ENCODE measurements at regions of chr9 and their contacts with region 1.

Region 1: GRCh38 chr9:22008736-22009562 is at the start of gene CDKN2B:
- DNase-seq: peak; percentile 99
- H3K27ac ChIP-seq: peak within 1 kb of the TSS; percentile 97
- CTCF ChIP-seq: peak; percentile 99

Region 2: GRCh38 chr9:21616082-21616778 is 392.7 kb before region 1 on chr9:
- CTCF ChIA-PET with region 1: no interaction called
- POLR2A ChIA-PET with region 1: no interaction called
- DNase-seq: peak; percentile 92
- H3K27ac ChIP-seq: peak overlapping the region; percentile 83
- CTCF ChIP-seq: no peak

Region 3: DNA sequence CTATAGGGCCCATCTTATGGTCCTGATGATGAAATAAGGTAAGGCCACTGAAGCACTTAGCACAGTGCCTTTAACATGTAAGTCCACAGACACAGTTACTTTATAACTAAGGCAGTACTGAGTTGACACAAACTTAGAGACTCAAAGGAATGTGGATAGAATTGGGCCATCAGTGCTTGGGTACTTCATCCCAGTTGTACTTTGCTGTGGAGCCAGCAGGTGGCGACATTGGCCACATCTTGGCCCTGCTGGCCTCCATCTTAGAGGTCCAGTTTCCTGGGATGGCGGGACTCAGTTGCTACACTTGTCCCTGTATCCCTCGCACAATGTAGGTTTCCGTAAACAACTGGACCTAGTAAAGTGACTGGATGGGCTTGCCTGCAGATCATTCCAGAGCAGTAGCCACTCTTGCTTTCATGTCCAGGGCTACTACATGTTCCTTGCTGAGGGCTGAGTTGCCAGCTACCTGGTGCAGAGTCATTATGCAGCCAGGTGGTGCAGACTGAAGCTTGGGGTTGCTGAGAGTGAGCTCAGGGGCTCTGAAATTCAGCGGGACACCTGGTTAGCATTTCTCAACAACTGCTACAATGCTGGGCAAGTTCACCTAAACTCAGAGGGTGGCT is 195.9 kb before region 1 on chr9:
- CTCF ChIA-PET with region 1: interaction called, 12 read pairs
- POLR2A ChIA-PET with region 1: no interaction called
- DNase-seq: peak; percentile 58
- H3K27ac ChIP-seq: peak overlapping the region; percentile 76
- CTCF ChIP-seq: peak; percentile 86

Region 4: GRCh38 chr9:21995177-21996086 is 13.5 kb before region 1 on chr9:
- CTCF ChIA-PET with region 1: interaction called, 16 read pairs
- POLR2A ChIA-PET with region 1: interaction called, 14 read pairs
- DNase-seq: peak; percentile 46
- H3K27ac ChIP-seq: peak overlapping the region; percentile 100
- CTCF ChIP-seq: peak; percentile 32; the same call in 1 of the 2 replicates

Region 5: DNA sequence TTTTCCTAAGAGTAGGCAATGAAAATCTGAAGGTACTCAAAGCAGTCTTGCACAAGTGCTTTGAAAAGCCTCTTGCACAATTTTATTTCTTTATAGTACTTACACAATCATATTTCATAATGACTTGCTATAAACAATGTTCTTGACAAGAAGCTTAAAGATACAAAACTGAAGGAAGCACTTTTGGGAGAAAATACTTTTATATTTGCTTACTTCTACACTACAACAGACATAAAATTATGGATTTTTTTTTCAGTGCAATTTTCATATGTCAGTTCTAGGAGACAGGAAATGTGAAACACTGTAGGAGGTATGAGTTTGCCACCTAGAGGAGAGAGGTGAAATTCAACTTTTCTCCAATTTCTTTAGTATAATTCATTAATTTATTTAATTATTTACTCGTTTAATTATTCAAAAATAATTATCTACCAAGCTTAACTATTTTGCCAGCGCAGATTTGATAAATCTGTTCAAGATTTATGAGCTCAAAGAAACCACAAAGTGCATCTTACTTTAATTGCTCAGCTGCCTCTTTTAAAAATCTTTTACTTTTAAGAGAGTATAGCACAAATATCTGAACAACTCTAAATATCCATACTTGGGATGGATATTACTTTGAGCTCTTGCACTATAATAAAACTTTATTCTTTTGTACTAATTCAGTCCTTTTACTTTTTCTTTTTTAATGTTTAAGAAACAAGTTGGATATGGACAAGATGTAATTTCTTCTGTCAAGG is 29.2 kb after region 1 on chr9:
- CTCF ChIA-PET with region 1: interaction called, 40 read pairs
- POLR2A ChIA-PET with region 1: interaction called, 4 read pairs
- DNase-seq: peak; percentile 50
- H3K27ac ChIP-seq: no peak overlapping the region
- CTCF ChIP-seq: peak; percentile 75

Region 6: DNA sequence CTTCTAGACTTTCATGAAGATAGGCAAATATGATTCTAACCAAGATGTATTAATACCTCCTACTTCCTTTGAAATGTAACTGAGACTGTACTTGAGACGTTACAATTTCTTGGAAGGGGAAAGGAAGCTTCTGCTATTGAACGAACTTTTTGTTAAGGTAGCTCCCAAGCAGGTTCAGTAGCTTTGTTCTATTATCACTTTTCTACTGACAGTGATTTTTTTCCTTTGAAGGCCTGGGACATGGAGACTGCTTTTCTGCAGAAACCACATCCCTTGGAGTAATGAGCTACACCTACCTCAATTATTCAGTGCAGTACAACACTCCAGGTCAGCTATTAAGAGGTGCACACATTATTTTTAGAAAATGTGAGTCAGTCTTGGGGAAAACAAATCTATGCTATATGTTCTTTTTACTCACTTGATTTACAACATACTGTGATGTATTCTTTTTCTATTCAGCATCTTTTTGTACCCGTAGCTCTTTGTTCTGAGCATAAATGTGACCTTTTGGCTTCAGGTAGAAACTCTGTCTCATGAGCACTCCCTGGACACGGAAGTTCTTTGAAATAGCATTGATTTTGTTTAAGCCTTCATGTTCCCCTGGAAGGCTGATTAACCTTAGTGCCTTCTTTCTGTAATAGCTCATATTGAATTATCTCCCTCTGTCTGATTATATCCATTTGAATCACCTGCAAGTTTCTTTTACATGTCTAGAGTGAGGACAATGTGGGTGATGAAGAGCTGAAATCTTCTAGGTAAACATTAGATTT is 56.7 kb after region 1 on chr9:
- CTCF ChIA-PET with region 1: no interaction called
- POLR2A ChIA-PET with region 1: no interaction called
- DNase-seq: no peak
- H3K27ac ChIP-seq: no peak overlapping the region
- CTCF ChIP-seq: no peak

Region 7: GRCh38 chr9:22119537-22120158 is 110.7 kb after region 1 on chr9:
- CTCF ChIA-PET with region 1: interaction called, 16 read pairs
- POLR2A ChIA-PET with region 1: interaction called, 3 read pairs
- DNase-seq: no peak
- H3K27ac ChIP-seq: no peak overlapping the region
- CTCF ChIP-seq: peak; percentile 66

Region 8: DNA sequence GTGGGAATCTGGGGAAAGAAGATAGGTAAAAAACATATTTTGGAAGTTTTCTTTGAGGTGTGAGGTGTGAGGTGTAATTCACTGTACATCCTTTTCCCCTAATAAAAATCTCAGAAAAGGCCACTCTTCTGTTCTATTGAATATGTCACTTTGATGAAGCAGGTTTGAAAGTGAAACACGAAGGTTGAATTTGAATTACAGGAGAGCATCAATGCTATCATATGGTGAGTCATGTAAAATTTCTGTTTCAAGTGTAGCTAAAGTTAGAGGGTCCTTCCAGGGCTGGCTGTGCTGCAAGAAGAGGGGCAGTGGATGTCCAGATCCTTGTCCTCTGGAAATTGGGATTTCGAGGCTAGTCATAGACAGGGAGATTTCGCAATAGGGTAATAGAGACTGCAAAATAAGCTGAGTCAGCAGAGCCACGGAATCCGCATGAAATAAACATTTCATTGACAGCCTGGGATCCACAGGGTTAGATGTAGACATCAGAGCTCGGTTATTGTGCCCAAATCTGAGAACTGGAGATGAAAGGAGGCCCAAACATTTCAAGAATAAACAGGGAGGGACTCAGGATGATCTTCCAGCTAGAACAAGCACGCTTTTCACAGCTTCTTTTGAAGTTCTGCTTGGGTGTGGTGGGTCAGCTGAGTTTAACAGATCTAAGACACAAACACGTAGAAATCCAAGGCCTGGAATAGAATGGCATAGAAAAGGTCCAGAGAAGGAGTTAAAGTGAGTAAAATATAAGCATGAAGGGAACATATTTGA is 194.6 kb after region 1 on chr9:
- CTCF ChIA-PET with region 1: no interaction called
- POLR2A ChIA-PET with region 1: no interaction called
- DNase-seq: no peak
- H3K27ac ChIP-seq: no peak overlapping the region
- CTCF ChIP-seq: no peak

Region 9: GRCh38 chr9:22238809-22239684 is 230.1 kb after region 1 on chr9:
- CTCF ChIA-PET with region 1: interaction called, 11 read pairs
- POLR2A ChIA-PET with region 1: interaction called, 3 read pairs
- DNase-seq: peak; percentile 33
- H3K27ac ChIP-seq: no peak overlapping the region
- CTCF ChIP-seq: peak; percentile 74

Region 10: DNA sequence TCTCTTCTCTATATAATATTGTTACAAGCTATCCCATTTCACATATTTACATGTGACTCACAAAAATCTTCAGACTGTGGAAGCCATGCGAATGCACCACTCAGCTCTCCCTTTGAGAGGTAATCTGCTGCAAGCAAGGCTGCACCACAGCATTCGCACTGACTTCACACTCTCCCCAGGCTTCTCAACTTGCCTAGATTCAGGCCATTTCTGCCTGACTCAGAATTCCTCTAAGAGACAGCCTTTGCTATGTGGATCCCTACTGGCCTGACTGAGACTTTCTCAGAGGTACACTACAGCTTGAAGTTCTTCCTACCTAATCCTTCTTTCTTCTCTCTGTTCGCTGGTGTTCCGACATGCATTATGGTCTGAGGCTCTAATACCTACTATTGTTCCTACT is 416.6 kb after region 1 on chr9:
- CTCF ChIA-PET with region 1: no interaction called
- POLR2A ChIA-PET with region 1: no interaction called
- DNase-seq: no peak
- H3K27ac ChIP-seq: no peak overlapping the region
- CTCF ChIP-seq: no peak

Measured in RWPE1 (cell line).